ENCODE measurements at regions of chr16 and their contacts with region 1.

Region 1: GRCh38 chr16:1105888-1106620 is 10.0 kb upstream of the C1QTNF8 start:
- DNase-seq: no peak
- ATAC-seq: peak; percentile 71

Region 2: DNA sequence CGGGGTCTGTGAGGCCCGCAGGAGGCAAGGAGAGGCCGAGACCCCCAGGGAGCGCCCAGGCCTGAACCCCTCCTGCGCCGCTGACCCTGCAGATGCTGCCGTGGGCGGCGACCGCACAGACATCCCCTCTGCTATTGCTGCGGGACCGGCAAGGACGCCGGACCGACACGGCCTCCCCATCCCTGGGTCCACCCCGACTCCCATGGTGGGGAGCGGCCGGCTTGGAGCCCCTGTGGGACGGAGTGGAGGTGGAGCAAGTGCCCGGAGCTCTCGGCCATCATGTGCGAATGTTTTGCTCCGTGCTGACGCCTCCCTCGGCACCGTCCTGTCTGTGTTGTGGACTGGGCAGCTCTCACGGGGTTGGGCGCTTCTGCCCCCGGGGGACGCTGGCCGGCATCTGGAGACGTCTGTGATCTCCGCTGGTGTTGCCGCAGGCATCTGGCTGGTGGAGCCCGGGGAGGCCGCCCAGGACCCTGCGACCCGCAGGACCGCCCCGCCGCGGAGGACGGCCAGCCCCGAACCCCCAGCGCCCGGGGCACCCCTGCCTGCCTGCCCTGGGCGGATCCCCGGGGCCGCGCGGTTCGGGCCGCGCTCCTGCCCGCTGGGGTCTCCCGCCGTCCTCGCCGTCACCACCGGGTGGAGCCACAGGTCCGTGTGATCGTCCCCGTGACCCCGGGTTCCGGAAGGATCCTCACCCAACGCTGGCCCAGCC is 292.7 kb before region 1 on chr16:
- intact Hi-C with region 1: loop called (anchors 2 kb)
- DNase-seq: no peak
- ATAC-seq: peak; percentile 76

Region 3: DNA sequence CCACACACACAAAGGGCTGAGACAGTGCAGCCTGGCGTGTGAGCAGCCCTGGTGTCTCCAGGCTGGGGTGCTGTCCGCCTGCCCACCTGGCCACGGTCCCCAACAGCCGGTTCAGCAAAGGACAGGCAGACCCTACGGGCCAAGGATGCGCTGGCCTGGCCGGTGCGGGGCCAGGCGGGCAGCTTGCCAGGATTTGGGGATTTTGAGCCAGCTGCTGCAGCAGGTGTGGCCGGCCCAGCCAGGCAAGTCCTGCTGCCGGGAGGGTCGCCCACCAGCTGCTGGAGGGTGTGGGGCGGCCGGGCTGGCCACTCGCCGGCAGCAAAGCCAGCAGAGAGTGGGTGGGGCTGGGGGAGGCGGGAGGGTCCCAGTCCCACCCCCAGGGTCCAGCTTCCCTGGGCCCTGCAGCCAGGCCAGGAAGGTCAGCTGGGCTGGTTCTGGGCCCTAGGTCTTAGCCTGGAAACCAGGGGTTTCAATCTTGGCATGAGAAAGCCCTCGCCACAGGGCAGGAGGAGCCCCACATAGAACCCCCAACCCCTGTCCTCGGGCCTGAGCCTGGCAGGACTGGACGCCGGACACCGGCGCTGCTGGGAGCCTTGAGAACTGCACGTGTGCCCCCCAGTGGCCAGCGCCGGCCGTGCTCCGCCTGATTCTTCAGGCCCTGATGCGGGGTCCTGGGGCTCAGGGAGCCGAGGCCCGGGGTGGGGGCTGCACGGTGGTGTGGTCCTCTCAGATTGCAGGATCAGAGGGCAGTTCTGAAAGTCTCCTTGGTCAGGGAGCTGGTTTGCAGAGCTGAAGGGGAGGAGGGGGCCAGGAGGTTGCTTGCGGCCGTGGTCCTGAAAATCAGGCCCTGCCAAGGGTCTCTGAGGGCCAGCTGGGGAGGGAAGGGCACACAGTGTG is 51.1 kb before region 1 on chr16:
- intact Hi-C with region 1: loop called (anchors 2 kb)
- DNase-seq: peak; percentile 44
- ATAC-seq: peak; percentile 75

Region 4: GRCh38 chr16:1194665-1195392 is 88.8 kb after region 1 on chr16:
- intact Hi-C with region 1: loop called (anchors 1 kb)
- DNase-seq: no peak
- ATAC-seq: no peak

Measured in Right ventricle myocardium inferior (tissue), 1 donor.